Colonic mucosa (tissue), 4 donors: ENCODE measurements at regions of chr1 and their contacts with region 1.

Region 1: DNA sequence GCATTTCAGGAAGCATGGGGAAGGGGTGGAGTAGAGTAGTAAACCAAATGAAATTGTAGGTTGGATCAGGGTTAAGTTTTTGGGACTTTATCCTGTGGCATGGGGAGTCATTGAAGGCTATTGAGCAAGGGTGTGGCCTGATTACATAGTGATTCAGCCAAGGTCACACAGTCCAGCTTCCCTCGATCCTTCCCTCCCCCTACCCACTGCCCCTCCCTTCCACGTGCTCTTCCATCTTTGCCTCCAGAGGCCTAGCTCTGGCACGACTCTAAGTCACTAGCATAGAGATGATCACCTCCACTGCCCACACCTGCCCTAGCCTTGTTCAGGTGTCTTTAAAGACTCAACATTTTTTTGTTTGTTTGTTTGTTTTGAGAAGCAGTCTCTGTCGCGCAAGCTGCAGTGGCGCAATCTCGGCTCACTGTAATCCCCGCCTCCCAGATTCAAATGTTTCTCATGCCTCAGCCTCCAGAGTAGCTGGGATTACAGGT is 37.2 kb upstream of the SLC9A1 start:
- DNase-seq: peak; percentile 80
- H3K4me3 ChIP-seq: no peak overlapping the region
- H3K27ac ChIP-seq: peak overlapping the region; percentile 86
- H3K4me1 ChIP-seq: peaks cover 11% of the 10 kb centered on the region
- H3K27me3 ChIP-seq: no peaks in the 10 kb centered on the region
- CTCF ChIP-seq: no peak

Region 2: DNA sequence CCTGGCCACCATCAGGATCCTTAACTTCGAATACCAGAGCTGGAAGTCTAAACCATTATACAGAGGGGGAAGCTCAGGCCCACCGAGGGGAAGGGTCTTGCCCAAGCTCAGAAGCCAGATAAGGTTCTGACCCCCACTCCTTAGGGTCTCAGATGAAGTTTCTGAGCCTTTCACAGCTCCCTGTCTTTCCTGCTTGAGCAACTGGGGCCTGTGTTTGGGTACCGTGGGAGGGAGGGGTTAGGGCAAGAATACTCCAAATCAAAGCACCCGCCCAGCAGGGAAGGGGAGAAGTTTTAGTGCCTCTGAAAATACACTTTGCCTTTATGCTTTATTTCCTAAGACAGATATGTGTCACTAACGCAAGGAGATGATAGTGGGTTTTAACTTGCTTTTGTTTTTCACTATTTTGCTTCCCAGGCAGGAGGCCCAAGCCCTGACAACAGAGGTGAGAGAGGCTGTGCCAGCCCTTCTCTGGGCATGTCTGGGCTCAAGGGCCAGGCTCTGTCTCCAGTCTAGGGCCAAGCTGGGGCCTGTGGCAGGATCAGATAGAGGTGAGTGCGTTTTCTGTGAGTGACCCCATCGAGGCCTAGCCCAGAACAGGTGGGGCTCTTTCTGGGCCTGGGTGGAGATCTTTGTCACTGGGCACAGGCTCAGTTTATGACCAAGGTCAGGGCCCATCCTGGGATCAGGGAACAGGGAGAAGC is 158.9 kb before region 1 on chr1:
- intact Hi-C with region 1: no loop called
- DNase-seq: no peak
- H3K4me3 ChIP-seq: no peak overlapping the region
- H3K27ac ChIP-seq: peak overlapping the region; percentile 62
- H3K4me1 ChIP-seq: peaks cover 4% of the 10 kb centered on the region
- H3K27me3 ChIP-seq: no peaks in the 10 kb centered on the region
- CTCF ChIP-seq: no peak

Region 3: GRCh38 chr1:27049607-27050006 is 142.5 kb before region 1 on chr1:
- intact Hi-C with region 1: no loop called
- DNase-seq: no peak
- H3K4me3 ChIP-seq: no peak overlapping the region
- H3K27ac ChIP-seq: no peak overlapping the region
- H3K4me1 ChIP-seq: no peaks in the 10 kb centered on the region
- H3K27me3 ChIP-seq: no peaks in the 10 kb centered on the region
- CTCF ChIP-seq: no peak

Region 4: GRCh38 chr1:27071049-27071416 is 121.1 kb before region 1 on chr1:
- intact Hi-C with region 1: no loop called
- DNase-seq: no peak
- H3K4me3 ChIP-seq: no peak overlapping the region
- H3K27ac ChIP-seq: no peak overlapping the region
- H3K4me1 ChIP-seq: no peaks in the 10 kb centered on the region
- H3K27me3 ChIP-seq: no peaks in the 10 kb centered on the region
- CTCF ChIP-seq: no peak

Region 5: DNA sequence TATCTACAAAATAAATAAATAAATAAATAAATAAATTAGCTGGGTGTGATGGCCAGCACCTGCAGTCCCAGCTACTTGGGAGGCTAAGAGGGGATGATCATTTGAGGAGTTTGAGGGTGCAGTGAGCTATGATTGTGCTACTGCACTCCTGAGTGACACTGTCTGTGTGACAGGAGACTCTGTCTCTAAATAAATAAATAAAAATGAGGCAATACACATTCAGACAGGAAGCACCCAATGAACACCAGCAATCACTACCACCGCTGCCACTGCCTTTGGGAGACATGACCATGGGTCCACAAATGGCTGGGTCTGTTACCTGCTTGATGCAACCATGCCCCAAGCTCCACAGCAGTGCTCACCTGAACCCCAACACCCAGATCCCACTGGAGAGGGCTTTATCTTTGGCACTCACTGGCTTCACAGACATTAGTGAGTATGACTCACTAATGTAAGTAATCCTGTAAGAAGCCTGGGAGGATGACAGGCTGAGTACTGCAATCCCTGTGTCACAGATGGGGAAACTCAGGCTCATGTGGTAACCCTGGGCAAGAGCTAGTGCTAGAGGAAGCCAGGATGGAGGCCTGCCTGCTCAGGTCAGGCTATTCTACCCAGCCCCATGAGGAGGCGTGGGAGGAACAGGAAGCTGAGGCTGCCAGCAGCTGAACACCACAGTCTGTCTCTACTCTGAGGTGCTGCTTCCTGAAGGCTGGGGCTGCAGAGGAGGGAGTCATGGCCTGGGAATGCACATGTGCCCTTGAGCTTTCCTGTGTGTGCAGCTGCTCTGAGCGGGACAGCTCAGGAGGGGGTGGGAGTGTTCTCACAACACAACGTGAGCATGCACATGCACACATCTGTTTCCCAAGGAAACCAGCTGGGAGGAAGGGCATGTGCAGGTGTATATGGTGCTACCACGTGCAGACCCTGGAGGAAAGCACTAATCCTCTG is 80.2 kb before region 1 on chr1:
- intact Hi-C with region 1: loop called (anchors 5 kb)
- DNase-seq: peak; percentile 77
- H3K4me3 ChIP-seq: no peak overlapping the region
- H3K27ac ChIP-seq: peak overlapping the region; percentile 24
- H3K4me1 ChIP-seq: peaks cover 28% of the 10 kb centered on the region
- H3K27me3 ChIP-seq: no peaks in the 10 kb centered on the region
- CTCF ChIP-seq: peak; percentile 35

Region 6: GRCh38 chr1:27284425-27285273 is 92.6 kb after region 1 on chr1:
- intact Hi-C with region 1: loop called (anchors 5 kb)
- DNase-seq: peak; percentile 94
- H3K4me3 ChIP-seq: no peak overlapping the region
- H3K27ac ChIP-seq: no peak overlapping the region
- H3K4me1 ChIP-seq: no peaks in the 10 kb centered on the region
- H3K27me3 ChIP-seq: no peaks in the 10 kb centered on the region
- CTCF ChIP-seq: peak; percentile 75